Psoas muscle (tissue), 8 donors: ENCODE measurements at regions of chr17 and their contacts with region 1.

Region 1: GRCh38 chr17:64202675-64203344 is 60.2 kb downstream of the TEX2 start:
- DNase-seq: no peak
- ATAC-seq: peak; percentile 86 to 88 (median 86)
- H3K4me3 ChIP-seq: no peak overlapping the region
- H3K27ac ChIP-seq: peak overlapping the region; percentile 82
- H3K4me1 ChIP-seq: peaks cover 78% of the 10 kb centered on the region
- H3K27me3 ChIP-seq: no peaks in the 10 kb centered on the region
- CTCF ChIP-seq: no peak

Region 2: DNA sequence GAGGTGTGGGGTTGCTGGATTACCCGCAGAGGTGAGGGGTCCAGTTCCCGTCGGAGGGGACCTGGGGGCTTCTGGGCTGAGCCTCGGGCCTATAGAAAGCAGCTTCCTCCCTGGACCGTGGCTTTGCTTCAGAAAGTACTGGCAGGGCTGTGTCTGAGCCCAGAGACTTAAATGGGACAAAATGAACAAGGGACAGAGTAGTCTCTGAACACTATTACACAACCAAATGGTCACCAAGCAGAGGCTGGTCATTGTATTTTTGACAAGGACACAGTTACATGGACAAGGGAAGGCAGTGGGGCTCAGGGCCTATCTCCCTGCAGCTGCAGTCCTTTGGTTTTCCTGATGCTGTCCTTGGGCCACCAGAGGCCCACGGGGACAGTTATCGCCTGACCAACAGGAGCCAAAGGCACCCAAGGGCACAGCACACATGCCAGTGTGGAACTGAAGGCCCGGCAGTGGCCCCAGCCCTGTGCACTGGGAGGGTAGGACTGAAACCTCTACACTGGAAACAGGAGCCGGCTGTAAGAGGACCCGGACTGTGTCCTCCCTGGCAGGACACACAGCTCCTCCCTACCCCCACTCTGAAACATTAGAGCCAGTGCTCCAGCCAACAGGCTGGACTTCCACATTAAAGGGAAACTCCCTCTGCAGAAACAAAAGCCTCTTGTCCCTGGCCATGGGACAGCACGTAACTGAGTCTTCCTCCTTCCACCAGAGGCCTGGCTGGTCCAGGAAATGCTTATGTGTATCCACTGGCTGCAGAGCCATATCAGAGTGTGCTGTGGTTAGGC is 46.9 kb before region 1 on chr17:
- intact Hi-C with region 1: loop called in 1 of 2 experiments (anchors 5 kb)
- DNase-seq: peak; percentile 75 to 91
- ATAC-seq: peak; percentile 92 to 96 (median 94)
- H3K4me3 ChIP-seq: no peak overlapping the region
- H3K27ac ChIP-seq: peak overlapping the region; percentile 88
- H3K4me1 ChIP-seq: peaks cover 87% of the 10 kb centered on the region
- H3K27me3 ChIP-seq: no peaks in the 10 kb centered on the region
- CTCF ChIP-seq: no peak

Region 3: DNA sequence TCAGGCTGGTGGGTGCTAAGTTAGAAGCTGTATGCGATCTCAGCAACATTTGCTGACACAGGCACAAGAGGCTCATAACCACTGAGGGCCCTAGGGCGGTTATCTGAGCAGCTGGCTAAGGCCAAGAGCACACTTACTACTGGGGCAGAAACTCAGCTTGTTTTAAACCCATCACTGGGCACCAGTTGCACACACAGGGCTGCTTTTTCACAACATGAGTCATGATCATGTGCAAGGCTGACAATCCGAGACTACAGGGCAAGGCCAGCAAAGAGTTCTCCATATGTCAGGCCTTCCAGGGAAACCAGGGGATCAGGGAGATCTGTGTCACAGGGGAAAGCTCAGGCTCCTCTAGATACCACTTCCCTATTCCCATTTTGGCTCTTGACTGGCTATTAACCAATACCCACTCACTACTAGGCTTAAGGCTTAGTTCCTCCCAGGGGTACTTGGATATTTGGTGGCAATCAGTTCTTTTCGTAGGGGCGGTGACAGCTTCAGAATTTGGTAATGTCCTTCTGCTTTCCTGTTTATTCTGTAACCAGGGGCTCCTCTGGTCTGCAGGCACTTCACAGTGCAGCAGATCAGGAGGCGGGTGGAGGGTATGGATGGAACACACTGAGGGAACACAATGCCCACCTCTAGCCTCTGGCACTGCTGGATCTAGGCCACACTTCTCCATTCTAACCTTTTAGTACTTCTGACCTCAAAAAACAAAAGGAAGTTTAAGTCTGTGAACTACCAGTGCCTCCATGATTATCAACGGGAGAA is 27.9 kb before region 1 on chr17:
- intact Hi-C with region 1: no loop called
- DNase-seq: peak in 1 of 2 donors; percentile 31
- ATAC-seq: peak; percentile 46 to 68 (median 62)
- H3K4me3 ChIP-seq: no peak overlapping the region
- H3K27ac ChIP-seq: peak overlapping the region; percentile 86
- H3K4me1 ChIP-seq: peaks cover 71% of the 10 kb centered on the region
- H3K27me3 ChIP-seq: no peaks in the 10 kb centered on the region
- CTCF ChIP-seq: no peak

Region 4: DNA sequence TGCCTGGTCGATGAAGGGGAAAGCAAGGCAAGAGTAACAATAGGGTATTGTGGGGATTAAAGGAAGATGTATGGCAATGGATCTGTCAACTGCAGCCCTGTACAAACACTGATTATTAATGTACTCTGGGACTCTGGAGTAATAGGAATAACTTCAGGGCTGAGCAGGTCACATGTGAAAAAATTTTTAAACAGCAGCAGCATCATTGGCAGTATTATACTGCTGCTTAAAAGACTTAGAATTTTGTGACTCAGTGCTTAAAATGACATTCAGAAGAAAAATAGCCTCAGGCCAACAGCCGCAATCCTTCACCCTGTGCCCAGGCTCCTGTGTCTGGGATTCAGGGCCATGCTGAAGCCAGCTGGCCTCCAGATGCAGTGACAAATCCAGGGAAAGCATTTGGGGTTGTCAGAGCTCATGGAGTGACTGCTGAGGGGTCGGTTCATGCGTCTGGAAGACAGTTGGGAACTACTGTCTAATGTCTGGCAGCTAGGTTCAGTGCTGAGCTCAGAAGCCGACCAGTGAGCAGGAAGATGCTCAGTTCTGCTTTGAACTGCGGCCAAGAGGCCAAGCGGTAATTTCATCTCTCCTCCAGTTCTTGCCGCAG is 38.0 kb after region 1 on chr17:
- intact Hi-C with region 1: loop called in 1 of 2 experiments (anchors 5 kb)
- DNase-seq: peak; percentile 65 to 79
- ATAC-seq: peak; percentile 59 to 77 (median 72)
- H3K4me3 ChIP-seq: no peak overlapping the region
- H3K27ac ChIP-seq: peak overlapping the region; percentile 47
- H3K4me1 ChIP-seq: peaks cover 48% of the 10 kb centered on the region
- H3K27me3 ChIP-seq: no peaks in the 10 kb centered on the region
- CTCF ChIP-seq: no peak

Region 5: DNA sequence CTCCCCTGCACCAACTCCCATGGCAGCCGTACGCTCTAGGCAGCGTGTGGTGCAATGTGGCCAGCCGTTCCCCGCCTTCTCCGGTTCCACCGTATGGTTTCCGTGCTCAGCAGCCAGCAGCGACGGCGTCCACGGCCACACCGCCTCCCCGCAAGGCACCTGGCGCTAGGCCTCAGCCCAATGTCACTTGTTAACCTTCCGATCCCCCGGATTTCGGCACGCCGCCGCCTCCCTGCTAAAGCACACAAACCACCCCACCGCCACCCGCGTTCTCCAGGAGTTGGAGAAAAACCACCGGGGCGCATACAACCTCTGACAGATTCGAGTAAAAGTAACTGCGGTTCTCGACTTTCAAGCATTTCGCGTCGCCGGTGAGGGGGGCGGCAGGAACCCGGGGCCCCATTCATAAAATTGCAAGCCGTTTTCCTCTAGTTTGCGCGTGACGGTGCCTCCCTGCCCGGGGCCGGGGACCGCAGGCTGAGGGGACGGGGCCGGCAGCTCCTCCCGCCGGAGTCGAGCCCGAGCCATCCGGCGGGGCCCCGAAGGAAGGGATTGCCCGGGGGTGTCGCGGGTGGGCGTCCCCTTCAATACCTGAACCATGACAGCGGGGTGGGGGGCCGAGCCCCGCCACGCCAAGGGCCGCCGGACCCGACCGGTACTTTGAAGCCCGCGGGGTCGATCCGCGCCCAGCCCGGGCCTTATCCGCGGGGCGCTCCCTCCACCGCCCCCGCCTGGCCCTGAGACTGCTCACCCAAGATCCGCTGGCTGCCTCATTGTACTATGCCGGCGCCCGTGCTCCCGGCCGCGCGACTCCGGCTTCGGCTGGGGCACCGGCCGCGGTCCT is 59.8 kb after region 1 on chr17 and contains the start of gene TEX2:
- intact Hi-C with region 1: no loop called
- DNase-seq: peak; percentile 75 to 89
- ATAC-seq: peak; percentile 65 to 88 (median 78)
- H3K4me3 ChIP-seq: peak within 1 kb of the TSS; percentile 97
- H3K27ac ChIP-seq: peak within 1 kb of the TSS; percentile 98
- H3K4me1 ChIP-seq: peaks cover 52% of the 10 kb centered on the region
- H3K27me3 ChIP-seq: no peaks in the 10 kb centered on the region
- CTCF ChIP-seq: no peak
- total RNA-seq, gene TEX2: 45.7 to 72.7 (median 55.7) TPM

Region 6: GRCh38 chr17:64281962-64282727 is 79.3 kb after region 1 on chr17:
- intact Hi-C with region 1: loop called in 1 of 2 experiments (anchors 5 kb)
- DNase-seq: peak; percentile 37 to 59
- ATAC-seq: peak; percentile 48 to 71 (median 65)
- H3K4me3 ChIP-seq: peak overlapping the region; percentile 35
- H3K27ac ChIP-seq: peak overlapping the region; percentile 51
- H3K4me1 ChIP-seq: peaks cover 28% of the 10 kb centered on the region
- H3K27me3 ChIP-seq: no peaks in the 10 kb centered on the region
- CTCF ChIP-seq: peak; percentile 87

Region 7: GRCh38 chr17:64306850-64307463 is 104.1 kb after region 1 on chr17:
- intact Hi-C with region 1: no loop called
- DNase-seq: peak; percentile 61 to 78
- ATAC-seq: peak in 3 of 4 donors; percentile 46 to 69 (median 50)
- H3K4me3 ChIP-seq: no peak overlapping the region
- H3K27ac ChIP-seq: no peak overlapping the region
- H3K4me1 ChIP-seq: no peaks in the 10 kb centered on the region
- H3K27me3 ChIP-seq: no peaks in the 10 kb centered on the region
- CTCF ChIP-seq: peak; percentile 82

Region 8: DNA sequence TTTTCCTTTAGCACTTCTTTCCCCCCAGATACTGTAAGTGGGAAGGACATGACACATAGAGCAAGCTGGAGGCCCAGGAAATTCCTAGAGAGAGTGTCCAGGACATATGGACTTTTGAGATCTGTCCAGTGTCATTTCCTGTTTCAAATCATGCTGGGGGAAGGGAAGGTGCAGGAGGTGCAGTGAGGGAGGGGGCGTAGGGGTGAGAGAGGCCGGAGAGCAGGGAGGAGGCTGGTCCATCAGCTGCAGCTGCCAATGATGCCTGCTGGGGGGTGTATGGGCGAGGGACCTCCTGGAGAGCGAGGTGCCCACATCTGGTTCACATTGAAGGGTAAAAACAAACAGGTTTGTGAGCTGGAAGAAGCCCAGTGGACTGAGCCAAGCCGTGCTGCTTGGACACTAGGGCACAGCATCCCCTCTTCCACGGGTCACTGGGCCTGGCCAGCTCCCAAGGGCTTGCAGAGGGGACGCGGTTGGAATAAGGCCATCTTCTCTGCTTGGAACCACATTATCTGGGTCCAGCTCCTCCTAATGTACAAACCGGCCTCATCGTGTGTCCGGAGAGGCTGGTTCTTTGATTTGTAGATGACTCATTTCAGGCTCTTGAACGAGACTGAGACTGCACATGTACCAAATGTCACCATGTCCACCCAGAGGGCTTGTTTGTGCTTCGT is 529.7 kb after region 1 on chr17:
- intact Hi-C with region 1: no loop called
- DNase-seq: peak; percentile 47 to 68
- ATAC-seq: peak in 3 of 4 donors; percentile 19 to 51 (median 48)
- H3K4me3 ChIP-seq: no peak overlapping the region
- H3K27ac ChIP-seq: no peak overlapping the region
- H3K4me1 ChIP-seq: no peaks in the 10 kb centered on the region
- H3K27me3 ChIP-seq: no peaks in the 10 kb centered on the region
- CTCF ChIP-seq: no peak